Heart left ventricle (tissue), 16 donors: ENCODE measurements at regions of chr1 and their contacts with region 1.

Region 1: GRCh38 chr1:84478876-84479868 is at the start of gene RPF1:
- DNase-seq: peak; percentile 66 to 87 (median 74)
- ATAC-seq: peak; percentile 92 to 98 (median 96)
- H3K4me3 ChIP-seq: peak within 1 kb of the TSS; percentile 45 to 88 (median 79)
- H3K27ac ChIP-seq: peak within 1 kb of the TSS; percentile 70 to 96 (median 84)
- H3K4me1 ChIP-seq: peaks cover 0 to 32% (median 20%) of the 10 kb centered on the region in 12 donors
- H3K27me3 ChIP-seq: peaks cover 0 to 38% (median 8%) of the 10 kb centered on the region in 9 donors
- CTCF ChIP-seq: no peak
- POLR2A ChIP-seq: peak; percentile 40 to 59
- total RNA-seq, gene RPF1: 30.3 to 63.9 (median 34.5) TPM

Region 2: DNA sequence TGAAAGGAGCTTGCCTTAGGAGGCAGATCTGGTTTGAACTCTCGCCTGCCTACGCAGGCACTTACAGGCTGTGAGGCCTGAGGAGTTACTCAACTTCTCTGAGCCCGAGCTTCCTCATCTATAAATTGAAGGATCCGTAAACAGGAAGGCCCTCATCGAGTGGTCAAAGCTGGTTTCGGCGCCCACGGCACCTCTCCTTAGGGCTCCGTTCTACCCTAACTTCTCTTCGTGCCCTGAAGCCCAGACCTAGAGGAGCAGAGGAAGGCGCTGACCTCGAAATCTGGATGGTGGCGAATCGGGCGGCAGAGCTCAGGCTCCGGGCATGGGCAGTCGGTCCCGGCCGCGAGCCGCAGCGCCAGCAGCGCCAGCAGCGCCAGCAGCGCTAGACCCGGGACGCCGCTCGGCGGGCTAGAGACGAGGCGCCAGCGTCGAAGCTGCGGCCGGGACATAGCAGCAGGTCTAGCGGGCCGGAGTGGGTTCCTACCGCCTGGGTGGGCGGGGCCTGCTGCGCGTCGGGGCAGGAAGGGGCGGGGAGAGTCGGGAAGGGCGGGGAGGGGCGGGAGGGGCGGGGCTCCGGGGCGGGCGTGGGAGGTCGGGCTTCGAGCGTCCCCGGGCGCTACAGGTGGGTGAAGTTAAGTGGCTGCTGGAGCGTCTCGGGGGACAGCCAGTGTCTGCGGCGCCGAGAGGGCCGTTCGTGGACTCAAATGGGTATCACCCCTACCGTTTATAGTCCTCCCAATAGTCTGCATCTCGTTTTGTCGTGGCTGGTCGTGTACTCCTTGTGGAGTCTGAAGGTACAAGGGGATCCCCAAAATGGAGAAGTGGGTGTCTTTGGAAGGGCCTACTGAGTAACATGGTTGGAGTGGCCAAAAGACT is 95.0 kb after region 1 on chr1 and contains the start of gene CTBS:
- intact Hi-C with region 1: loop called in 2 of 10 experiments (anchors 5 kb)
- DNase-seq: peak; percentile 91 to 95 (median 92)
- ATAC-seq: peak; percentile 95 to 99 (median 98)
- H3K4me3 ChIP-seq: peak within 1 kb of the TSS; percentile 60 to 92 (median 76)
- H3K27ac ChIP-seq: peak within 1 kb of the TSS; percentile 90 to 100 (median 97)
- H3K4me1 ChIP-seq: peaks cover 0 to 27% (median 14%) of the 10 kb centered on the region in 12 donors
- H3K27me3 ChIP-seq: no peaks in the 10 kb centered on the region
- CTCF ChIP-seq: peak in 1 of 12 donors; percentile 13
- POLR2A ChIP-seq: peak in 1 of 2 donors; percentile 81
- total RNA-seq, gene CTBS: 6.6 to 19.9 (median 7.8) TPM